Common myeloid progenitor, CD34-positive (primary cell): ENCODE measurements at regions of chr6 and their contacts with region 1.

Region 1: GRCh38 chr6:3748208-3749066 is 3.1 kb downstream of the PXDC1 start:
- DNase-seq: peak in 2 of 3 donors; percentile 57 to 59
- H3K4me3 ChIP-seq: no peak overlapping the region
- H3K27ac ChIP-seq: no peak overlapping the region
- H3K4me1 ChIP-seq: peaks cover 0 to 49% (median 37%) of the 10 kb centered on the region in 4 experiments
- H3K27me3 ChIP-seq: peaks cover 0 to 4% (median 0%) of the 10 kb centered on the region in 5 experiments

Region 2: DNA sequence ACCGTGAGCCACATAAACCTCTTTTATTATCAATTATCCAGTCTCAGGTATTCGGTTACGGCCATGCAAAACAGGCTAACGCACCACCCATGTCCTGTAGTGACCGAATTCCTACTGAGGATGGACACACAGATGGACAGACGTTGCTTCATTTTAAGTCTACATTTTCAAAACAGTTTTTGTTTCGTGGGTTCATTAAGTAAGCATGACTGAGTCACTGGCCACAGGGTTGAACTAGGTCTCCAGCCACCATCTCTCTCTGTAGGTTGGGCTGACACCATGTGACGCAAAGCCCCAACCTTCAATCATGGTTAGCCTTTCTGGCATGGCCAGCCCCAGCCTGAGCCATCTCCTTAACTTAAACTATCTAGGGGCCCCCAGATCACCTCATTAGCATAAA is 181.6 kb before region 1 on chr6:
- CTCF ChIA-PET with region 1: no interaction called
- POLR2A ChIA-PET with region 1: no interaction called
- DNase-seq: no peak
- H3K4me3 ChIP-seq: no peak overlapping the region
- H3K27ac ChIP-seq: no peak overlapping the region
- H3K4me1 ChIP-seq: peaks cover 0 to 14% (median 0%) of the 10 kb centered on the region in 4 experiments
- H3K27me3 ChIP-seq: no peaks in the 10 kb centered on the region

Region 3: GRCh38 chr6:3848925-3849605 is 100.6 kb after region 1 on chr6 and contains the start of gene FAM50B:
- CTCF ChIA-PET with region 1: interaction called, 13 read pairs
- POLR2A ChIA-PET with region 1: no interaction called
- DNase-seq: peak; percentile 85 to 92 (median 91)
- H3K4me3 ChIP-seq: peak within 1 kb of the TSS; percentile 28 to 84 (median 64)
- H3K27ac ChIP-seq: peak within 1 kb of the TSS in 1 of 2 experiments; percentile 34
- H3K4me1 ChIP-seq: peaks cover 0 to 11% (median 3%) of the 10 kb centered on the region in 4 experiments
- H3K27me3 ChIP-seq: no peaks in the 10 kb centered on the region

Region 4: GRCh38 chr6:3887150-3887700 is 138.8 kb after region 1 on chr6:
- CTCF ChIA-PET with region 1: interaction called, 16 read pairs
- POLR2A ChIA-PET with region 1: no interaction called
- DNase-seq: peak; percentile 18 to 45 (median 39)
- H3K4me3 ChIP-seq: no peak overlapping the region
- H3K27ac ChIP-seq: no peak overlapping the region
- H3K4me1 ChIP-seq: no peaks in the 10 kb centered on the region
- H3K27me3 ChIP-seq: no peaks in the 10 kb centered on the region

Region 5: DNA sequence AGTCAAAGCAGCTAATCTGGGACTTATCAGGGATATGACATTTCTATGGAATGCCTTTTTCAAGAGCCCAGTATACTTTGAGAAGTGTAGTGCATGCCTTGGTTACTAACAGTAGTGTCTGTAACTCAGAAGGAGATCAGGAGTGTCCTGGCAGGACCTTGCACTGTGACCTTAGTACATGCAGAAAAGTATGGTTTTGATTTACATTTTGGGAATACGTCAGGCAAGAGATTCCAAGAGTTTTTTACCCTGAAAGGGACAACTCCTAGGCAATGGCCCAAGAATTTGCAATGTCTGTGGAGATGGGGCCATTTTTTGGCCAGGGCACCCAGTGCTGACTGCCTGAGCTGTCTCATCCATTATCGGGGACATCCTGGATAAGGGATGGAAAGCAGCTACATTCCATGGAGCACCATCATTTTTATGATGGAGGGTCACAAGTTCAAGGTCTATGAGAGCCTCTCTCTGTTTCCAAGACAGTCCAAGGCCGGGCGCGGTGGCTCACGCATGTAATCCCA is 180.9 kb after region 1 on chr6:
- CTCF ChIA-PET with region 1: interaction called, 22 read pairs
- POLR2A ChIA-PET with region 1: no interaction called
- DNase-seq: no peak
- H3K4me3 ChIP-seq: no peak overlapping the region
- H3K27ac ChIP-seq: no peak overlapping the region
- H3K4me1 ChIP-seq: no peaks in the 10 kb centered on the region
- H3K27me3 ChIP-seq: no peaks in the 10 kb centered on the region

Region 6: GRCh38 chr6:3990692-3991501 is 242.5 kb after region 1 on chr6:
- CTCF ChIA-PET with region 1: interaction called, 32 read pairs
- POLR2A ChIA-PET with region 1: no interaction called
- DNase-seq: peak; percentile 84 to 88 (median 86)
- H3K4me3 ChIP-seq: peak overlapping the region in 5 of 7 experiments; percentile 6 to 73 (median 49)
- H3K27ac ChIP-seq: no peak overlapping the region
- H3K4me1 ChIP-seq: peaks cover 0 to 6% (median 1%) of the 10 kb centered on the region in 4 experiments
- H3K27me3 ChIP-seq: no peaks in the 10 kb centered on the region

Region 7: GRCh38 chr6:4008324-4009047 is 260.0 kb after region 1 on chr6:
- CTCF ChIA-PET with region 1: interaction called, 30 read pairs
- POLR2A ChIA-PET with region 1: no interaction called
- DNase-seq: peak; percentile 68 to 84 (median 84)
- H3K4me3 ChIP-seq: no peak overlapping the region
- H3K27ac ChIP-seq: no peak overlapping the region
- H3K4me1 ChIP-seq: peaks cover 0 to 11% (median 8%) of the 10 kb centered on the region in 4 experiments
- H3K27me3 ChIP-seq: no peaks in the 10 kb centered on the region